CD4-positive, alpha-beta T cell (primary cell): ENCODE measurements at regions of chr15 and their contacts with region 1.

Region 1: DNA sequence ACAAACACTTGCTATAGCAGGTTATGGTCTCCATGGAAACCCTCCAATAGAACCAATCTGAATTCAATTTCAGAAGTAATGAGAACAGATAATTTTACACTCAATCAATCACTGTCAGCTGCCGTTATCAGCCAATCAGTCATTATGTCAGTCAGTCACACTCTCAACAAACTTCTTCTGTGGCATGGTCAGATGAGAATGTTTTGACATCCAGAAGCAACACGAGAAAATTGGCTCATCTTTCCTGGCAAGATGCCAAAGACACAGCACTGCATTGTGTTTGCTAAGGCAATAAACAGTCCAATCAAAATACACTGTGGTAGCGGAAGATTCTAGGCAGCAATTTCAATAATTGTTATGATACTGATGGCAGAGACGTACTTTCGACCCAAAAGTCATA is 190.7 kb downstream of the RORA start:
- DNase-seq: peak in 1 of 14 experiments; percentile 5
- ATAC-seq: no peak
- H3K4me3 ChIP-seq: no peak overlapping the region
- H3K4me3 Mint-ChIP-seq: no peak overlapping the region
- H3K27ac ChIP-seq: no peak overlapping the region
- H3K27ac Mint-ChIP-seq: no peak overlapping the region
- H3K4me1 ChIP-seq: no peaks in the 10 kb centered on the region
- H3K4me1 Mint-ChIP-seq: no peaks in the 10 kb centered on the region
- H3K27me3 ChIP-seq: peaks cover 0 to 7% of the 10 kb centered on the region in 2 experiments
- H3K27me3 Mint-ChIP-seq: peaks cover 46% of the 10 kb centered on the region
- CTCF ChIP-seq: no peak

Region 2: GRCh38 chr15:60740787-60741354 is 297.5 kb before region 1 on chr15:
- CTCF ChIA-PET with region 1: no interaction called
- POLR2A ChIA-PET with region 1: no interaction called
- intact Hi-C with region 1: no loop called
- DNase-seq: peak in 3 of 14 experiments; percentile 47 to 68 (median 52)
- ATAC-seq: peak; percentile 43
- H3K4me3 ChIP-seq: no peak overlapping the region
- H3K4me3 Mint-ChIP-seq: no peak overlapping the region
- H3K27ac ChIP-seq: no peak overlapping the region
- H3K27ac Mint-ChIP-seq: no peak overlapping the region
- H3K4me1 ChIP-seq: peaks cover 23% of the 10 kb centered on the region
- H3K4me1 Mint-ChIP-seq: peaks cover 12% of the 10 kb centered on the region
- H3K27me3 ChIP-seq: no peaks in the 10 kb centered on the region
- H3K27me3 Mint-ChIP-seq: no peaks in the 10 kb centered on the region
- CTCF ChIP-seq: no peak

Region 3: GRCh38 chr15:61099030-61099800 is 60.8 kb after region 1 on chr15:
- CTCF ChIA-PET with region 1: no interaction called
- POLR2A ChIA-PET with region 1: no interaction called
- intact Hi-C with region 1: loop called in 1 of 2 experiments (anchors 10 kb)
- DNase-seq: no peak
- ATAC-seq: no peak
- H3K4me3 ChIP-seq: no peak overlapping the region
- H3K4me3 Mint-ChIP-seq: no peak overlapping the region
- H3K27ac ChIP-seq: no peak overlapping the region
- H3K27ac Mint-ChIP-seq: no peak overlapping the region
- H3K4me1 ChIP-seq: no peaks in the 10 kb centered on the region
- H3K4me1 Mint-ChIP-seq: no peaks in the 10 kb centered on the region
- H3K27me3 ChIP-seq: peaks cover 11 to 13% of the 10 kb centered on the region in 2 experiments
- H3K27me3 Mint-ChIP-seq: peaks cover 56% of the 10 kb centered on the region
- CTCF ChIP-seq: no peak